ENCODE measurements at regions of chr10 and their contacts with region 1.

Region 1: GRCh38 chr10:62760401-62760800 is 44.1 kb upstream of the ADO start:
- DNase-seq: no peak

Region 2: DNA sequence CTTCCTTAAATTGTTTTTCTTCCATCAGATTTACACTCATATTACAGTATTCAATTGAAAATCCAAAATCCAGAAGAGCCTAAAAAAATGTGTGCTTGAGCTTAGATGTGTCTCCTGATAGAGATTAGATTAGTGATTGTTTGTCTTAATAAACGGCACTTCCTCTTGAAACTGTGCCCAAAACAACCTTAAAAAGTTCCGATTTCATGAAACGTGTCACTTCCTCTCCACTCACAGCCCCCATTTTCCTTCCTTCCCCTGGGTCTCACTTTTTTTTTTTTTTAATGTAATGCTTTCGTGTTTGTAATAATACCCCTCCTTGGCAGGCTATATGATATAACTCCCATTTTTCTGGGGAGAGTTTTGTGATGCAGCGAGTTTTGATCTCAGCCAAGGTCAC is 70.7 kb before region 1 on chr10:
- intact Hi-C with region 1: loop called (anchors 2 kb)
- DNase-seq: no peak

Region 3: DNA sequence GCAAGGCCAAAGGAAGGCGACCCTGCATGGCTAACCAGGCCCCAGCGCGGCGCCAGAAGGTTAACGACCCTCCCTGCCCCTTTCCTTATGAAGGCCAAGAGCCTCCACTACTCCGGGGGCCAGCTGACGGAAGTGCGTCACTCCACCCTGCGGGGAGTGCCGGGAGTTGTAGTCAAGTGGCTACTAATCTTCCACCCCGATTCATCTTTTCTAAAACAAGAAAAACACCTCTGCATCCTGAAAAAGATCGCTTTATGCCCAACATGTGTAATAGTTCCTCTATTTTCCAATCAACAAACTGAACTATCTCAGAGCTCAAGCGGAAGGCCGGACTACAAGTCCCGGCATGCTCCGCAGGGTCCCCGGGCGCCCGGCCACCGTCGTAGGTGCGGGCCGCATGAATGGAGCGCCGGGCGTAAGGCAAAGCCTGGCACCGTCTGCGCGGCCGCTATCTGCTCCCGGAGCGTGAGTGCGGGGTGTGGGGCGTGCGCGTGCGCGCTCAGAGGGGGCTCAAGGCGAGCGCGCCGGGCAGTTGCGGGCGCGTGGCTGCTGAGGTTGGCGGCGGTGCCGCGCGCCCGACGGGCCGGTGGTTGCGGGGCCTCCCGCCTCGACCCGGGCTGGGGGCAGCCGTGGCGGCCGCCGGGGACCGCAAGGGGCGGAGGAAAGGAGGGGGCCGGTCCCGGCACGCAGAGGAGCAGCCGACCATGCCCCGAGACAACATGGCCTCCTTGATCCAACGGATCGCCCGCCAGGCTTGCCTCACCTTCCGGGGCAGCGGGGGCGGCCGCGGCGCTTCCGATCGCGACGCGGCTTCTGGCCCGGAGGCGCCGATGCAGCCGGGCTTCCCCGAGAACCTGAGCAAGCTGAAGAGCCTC is 44.2 kb after region 1 on chr10 and contains the start of gene ADO:
- intact Hi-C with region 1: loop called (anchors 2 kb)
- DNase-seq: peak; percentile 92
- total RNA-seq, gene ADO: 19.5 TPM

Measured in cardiac septum (tissue), 1 donor.